GM23248 (cell line): ENCODE measurements at regions of chr3 and their contacts with region 1.

Region 1: DNA sequence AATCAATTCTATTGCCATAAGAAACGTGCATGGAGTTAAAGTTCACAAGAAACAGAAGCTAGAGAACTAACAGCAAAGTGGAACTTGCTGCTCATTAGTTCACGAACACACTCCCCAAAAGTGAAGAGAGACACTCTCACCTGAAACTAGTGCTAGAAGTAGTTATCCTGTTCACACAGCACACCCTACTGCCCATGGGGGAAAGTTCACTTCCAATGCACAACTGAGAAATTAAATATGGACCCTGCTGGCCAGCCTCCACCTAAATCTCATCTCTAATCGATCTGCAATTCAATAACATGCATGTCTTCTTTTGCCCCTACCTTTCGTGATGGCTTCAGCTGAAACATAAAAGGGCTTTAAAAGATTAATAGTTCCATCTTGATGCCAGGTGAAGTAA is 39.4 kb upstream of the FRMD4B start:
- DNase-seq: peak; percentile 52
- H3K4me3 ChIP-seq: no peak overlapping the region
- H3K27ac ChIP-seq: no peak overlapping the region
- H3K4me1 ChIP-seq: peaks cover 10% of the 10 kb centered on the region; the same call in 1 of the 2 replicates
- H3K27me3 ChIP-seq: no peaks in the 10 kb centered on the region

Region 2: GRCh38 chr3:68779261-68779660 is 646.0 kb before region 1 on chr3:
- in situ Hi-C with region 1: no loop called
- DNase-seq: no peak
- H3K4me3 ChIP-seq: no peak overlapping the region
- H3K27ac ChIP-seq: no peak overlapping the region
- H3K4me1 ChIP-seq: no peaks in the 10 kb centered on the region
- H3K27me3 ChIP-seq: no peaks in the 10 kb centered on the region

Region 3: DNA sequence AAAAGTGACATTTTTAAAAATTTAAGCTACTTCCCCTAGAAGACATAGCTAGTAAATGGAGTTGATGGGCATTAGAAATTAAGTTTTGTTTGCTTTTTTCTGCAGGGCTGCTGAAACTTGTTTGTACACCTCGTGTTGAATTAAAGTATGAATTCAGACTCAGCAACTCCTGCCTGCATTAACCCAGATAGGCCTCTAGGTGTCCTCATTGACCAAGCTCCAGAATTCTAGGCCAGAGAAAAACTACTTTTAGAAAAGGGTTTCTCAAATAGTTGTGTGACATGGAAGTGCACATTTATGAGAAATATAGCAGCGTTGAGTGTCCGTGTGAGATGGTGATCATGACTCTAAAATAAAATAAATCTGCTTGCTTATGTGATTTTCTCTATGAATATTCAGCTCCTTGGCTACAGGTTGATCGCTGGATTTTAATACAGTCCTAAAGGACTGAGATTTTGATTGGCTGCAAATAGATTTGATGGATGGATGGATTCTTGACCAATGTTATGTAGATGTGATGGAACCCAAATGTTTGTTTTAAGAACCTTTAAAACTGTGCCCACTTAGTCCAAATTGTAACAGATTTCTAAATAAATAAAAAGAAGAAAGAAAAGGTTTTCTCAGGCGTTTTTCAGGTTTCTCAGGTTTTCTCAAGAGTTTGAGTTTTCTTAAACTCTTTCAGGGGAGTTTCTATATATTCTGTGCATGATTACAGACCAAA is 263.5 kb before region 1 on chr3:
- in situ Hi-C with region 1: loop called (anchors 10 kb)
- DNase-seq: peak; percentile 69
- H3K4me3 ChIP-seq: no peak overlapping the region
- H3K27ac ChIP-seq: no peak overlapping the region
- H3K4me1 ChIP-seq: no peaks in the 10 kb centered on the region
- H3K27me3 ChIP-seq: peaks cover 9% of the 10 kb centered on the region

Region 4: DNA sequence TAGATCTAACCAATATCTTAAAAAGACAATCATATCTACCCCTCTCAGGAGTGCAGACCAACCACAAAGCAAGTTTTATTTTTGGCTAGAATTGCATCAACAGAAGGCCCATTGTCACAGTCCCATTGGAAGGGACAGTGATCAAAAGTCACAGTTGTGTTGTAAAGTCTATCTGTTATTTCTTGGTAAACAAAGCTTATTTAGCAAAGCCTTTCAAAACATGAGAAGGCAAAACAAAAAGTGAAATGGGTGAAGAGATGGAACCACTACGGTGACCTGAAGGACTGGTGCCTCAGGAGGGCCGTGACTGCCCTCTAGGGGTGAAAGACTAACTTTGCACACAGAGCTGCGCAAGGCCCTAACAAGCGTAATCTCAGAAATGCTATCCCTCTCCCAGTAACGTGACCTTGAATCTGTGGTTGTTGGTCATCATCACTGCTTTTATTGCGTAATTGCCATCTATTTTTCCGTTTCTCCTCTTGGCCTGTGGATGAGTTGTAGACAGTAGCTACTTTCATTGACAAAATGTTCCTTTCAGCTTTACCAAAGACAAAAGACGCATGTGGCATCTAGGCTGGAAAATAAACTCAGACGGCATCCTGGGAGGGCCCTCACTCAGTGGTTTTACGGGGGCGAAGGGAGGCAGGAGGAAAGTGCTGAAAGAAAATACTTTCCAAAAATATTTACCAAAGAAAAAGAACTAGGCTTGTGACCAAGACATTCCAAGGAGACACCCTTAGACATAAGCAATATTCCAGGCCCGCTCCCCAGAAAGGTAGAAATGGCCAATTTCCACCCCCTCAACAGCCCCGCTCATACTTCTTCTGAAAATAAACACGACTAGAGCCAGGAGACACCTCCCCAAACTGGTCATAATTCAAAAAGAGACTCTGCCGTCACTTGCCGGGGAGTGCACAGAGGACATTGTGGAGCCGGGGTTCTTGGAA is 118.7 kb before region 1 on chr3:
- in situ Hi-C with region 1: loop called (anchors 10 kb)
- DNase-seq: peak; percentile 90
- H3K4me3 ChIP-seq: no peak overlapping the region
- H3K27ac ChIP-seq: no peak overlapping the region
- H3K4me1 ChIP-seq: no peaks in the 10 kb centered on the region
- H3K27me3 ChIP-seq: no peaks in the 10 kb centered on the region

Region 5: DNA sequence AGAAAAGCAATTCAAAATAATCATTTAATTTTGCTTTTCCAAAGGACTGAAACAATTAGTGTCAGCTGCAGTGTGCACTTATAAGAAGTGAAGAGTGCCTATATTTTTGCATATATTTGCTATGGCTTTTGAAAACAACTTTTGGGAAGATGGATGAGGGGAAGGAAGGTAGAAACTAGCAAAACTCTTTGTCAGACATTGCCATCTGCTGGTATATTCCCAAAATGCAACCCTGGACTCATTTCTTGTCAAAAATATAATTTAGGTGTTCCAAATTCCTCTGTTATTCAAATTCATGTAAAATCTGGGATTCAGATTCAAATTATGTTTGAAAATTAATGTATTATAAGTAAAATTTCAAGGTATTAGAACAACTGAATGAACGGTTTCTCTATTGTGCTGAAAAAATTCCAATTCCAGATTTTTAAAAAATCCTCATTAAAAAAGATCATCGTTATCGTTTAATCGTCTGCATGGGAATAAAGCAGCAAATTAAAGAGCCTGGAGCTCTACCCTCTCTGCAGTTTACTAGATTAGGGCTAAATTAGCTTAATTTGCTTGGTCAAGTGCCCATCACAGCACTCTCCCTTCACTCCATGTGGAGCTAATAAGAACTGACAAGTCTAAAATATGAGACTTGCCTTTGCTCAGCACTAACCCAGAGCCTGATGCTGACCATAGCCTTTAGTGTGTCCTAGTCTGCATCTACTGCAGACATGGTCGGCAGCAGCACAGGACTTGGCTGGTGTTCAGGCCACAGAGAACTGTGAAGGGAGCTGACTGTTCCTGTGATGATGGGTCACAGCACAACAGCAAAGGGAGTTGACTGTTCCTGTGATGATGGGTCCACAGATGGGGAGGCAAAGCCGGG is 246.1 kb after region 1 on chr3:
- in situ Hi-C with region 1: no loop called
- DNase-seq: peak; percentile 61
- H3K4me3 ChIP-seq: no peak overlapping the region
- H3K27ac ChIP-seq: no peak overlapping the region
- H3K4me1 ChIP-seq: no peaks in the 10 kb centered on the region
- H3K27me3 ChIP-seq: peaks cover 23% of the 10 kb centered on the region